ENCODE measurements at regions of chr16 and their contacts with region 1.

Region 1: DNA sequence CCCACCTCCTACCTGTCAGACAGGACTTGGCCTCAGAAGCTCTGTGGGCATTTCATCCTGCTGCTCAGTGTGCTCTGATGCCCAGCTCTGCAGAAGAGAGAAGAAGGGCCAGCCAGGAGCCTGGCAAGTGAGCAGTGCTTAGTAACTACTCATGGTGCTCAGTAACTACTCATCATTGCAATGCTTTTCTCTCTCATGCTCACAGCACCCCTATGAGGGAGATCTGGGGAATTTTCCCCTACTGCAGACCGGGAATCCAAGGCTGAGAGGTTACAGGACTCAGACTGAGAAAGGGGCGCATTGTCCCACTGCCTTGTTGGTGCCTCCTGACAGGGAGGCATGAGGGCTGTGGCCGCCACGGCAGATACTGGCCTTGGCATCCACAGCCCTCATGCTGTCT is 261.1 kb downstream of the C16orf95 start:
- DNase-seq: peak; percentile 22

Region 2: DNA sequence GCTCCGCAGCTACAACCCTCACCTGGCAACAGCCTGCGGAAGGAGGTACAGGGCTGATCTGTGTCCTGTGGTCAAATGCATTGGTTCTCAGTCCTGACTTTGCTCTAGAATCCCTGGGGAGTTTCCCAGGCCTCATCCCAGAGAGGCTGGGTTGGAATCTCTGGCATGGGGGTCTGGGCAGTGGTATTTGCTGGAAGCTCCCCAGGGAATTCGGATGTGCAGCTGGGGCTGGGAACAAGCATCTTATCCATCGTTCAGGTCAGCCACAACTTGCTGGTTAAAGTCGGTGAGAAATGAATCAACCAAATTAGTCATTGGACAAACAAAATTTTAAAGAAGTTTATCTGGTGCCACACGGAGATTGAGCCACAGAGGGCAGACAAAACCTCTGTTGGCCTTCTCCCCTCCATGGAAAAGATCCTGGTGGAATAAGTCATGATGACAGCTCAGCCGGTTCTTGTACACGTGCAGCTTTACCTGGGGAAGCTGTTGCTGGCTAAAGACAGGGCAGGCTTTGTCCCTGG is 246.6 kb before region 1 on chr16:
- intact Hi-C with region 1: no loop called
- DNase-seq: no peak

Region 3: DNA sequence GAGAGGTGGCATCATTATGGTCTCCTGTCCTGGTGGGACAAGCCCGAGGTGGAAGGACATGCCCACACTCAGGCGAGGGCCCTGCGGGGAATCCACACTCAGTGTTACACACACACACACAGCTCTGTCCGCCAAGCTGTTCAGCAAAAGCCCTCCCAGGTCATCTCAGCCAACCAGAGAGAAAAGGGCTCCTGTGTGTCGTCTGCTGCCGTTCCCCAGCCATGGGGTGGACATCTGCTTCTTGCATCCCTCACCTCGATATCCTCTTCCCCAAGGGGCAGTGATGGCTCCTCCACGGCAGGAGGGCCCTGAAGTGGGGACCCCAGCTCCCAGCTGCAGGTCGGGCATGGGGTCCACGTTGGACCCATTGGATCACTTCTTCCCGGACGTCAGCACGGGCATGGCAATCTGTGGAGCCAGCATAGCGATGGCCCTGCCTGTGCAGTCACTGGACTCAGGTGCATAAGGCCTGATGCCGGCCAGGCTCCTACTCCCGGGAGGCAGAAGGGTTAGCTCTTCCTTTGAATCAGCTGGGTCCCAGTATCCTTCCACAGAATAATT is 28.9 kb before region 1 on chr16:
- intact Hi-C with region 1: no loop called
- DNase-seq: peak; percentile 70

Region 4: DNA sequence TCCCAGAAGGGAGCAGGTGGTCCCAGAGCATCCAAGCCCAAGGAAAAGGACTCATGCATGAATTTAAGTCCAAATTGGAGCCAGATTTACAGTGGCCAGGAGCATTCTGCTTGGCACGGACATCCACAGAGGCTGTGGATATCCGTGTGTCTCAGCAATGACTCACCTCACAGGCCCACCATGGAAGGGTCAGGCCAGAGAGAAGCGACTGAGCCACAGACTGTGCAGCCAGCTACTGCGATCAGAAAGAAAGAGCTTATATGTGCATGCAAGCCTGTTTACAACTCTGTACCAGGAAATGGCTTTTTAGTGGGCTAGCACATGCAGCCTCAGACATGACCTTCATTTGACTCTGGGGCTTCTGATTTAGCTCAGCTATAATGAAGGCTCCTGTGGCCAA is 30.1 kb after region 1 on chr16:
- intact Hi-C with region 1: loop called (anchors 2 kb)
- DNase-seq: no peak